Dendritic cell treated with granulocyte-macrophage colony-stimulating factor and Interleukin-4, amounts not matched to agents 40 ng/mL and 50 ng/mL, for 4 days (primary cell): ENCODE measurements at regions of chr6 and their contacts with region 1.

Region 1: GRCh38 chr6:219641-220198 is 72.6 kb upstream of the DUSP22 start:
- H3K4me3 Mint-ChIP-seq: peak overlapping the region; percentile 18
- H3K27ac Mint-ChIP-seq: no peak overlapping the region
- H3K4me1 Mint-ChIP-seq: peaks cover 78% of the 10 kb centered on the region
- H3K27me3 Mint-ChIP-seq: no peaks in the 10 kb centered on the region

Region 2: GRCh38 chr6:259901-260508 is 40.3 kb after region 1 on chr6:
- intact Hi-C with region 1: loop called (anchors 5 kb)
- H3K4me3 Mint-ChIP-seq: no peak overlapping the region
- H3K27ac Mint-ChIP-seq: no peak overlapping the region
- H3K4me1 Mint-ChIP-seq: peaks cover 40% of the 10 kb centered on the region
- H3K27me3 Mint-ChIP-seq: no peaks in the 10 kb centered on the region

Region 3: DNA sequence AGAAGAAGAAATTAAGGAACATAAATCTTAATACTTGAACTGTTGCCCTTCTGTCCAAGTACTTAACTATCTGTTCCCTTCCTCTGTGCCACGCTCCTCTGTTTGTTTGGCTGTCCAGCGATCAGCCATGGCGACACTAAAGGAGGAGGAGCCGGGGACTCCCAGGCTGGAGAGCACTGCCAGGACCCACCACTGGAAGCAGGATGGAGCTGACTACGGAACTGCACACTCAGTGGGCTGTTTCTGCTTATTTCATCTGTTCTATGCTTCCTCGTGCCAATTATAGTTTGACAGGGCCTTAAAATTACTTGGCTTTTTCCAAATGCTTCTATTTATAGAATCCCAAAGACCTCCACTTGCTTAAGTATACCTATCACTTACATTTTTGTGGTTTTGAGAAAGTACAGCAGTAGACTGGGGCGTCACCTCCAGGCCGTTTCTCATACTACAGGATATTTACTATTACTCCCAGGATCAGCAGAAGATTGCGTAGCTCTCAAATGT is 188.9 kb after region 1 on chr6:
- intact Hi-C with region 1: loop called (anchors 10 kb)
- H3K4me3 Mint-ChIP-seq: peak overlapping the region; percentile 20
- H3K27ac Mint-ChIP-seq: peak overlapping the region; percentile 86
- H3K4me1 Mint-ChIP-seq: peaks cover 49% of the 10 kb centered on the region
- H3K27me3 Mint-ChIP-seq: no peaks in the 10 kb centered on the region